Naive thymus-derived CD4-positive, alpha-beta T cell (primary cell): ENCODE measurements at regions of chr16 and their contacts with region 1.

Region 1: GRCh38 chr16:17369421-17370222 is 101.1 kb downstream of the XYLT1 start:
- DNase-seq: peak; percentile 45 to 88 (median 84)
- ATAC-seq: peak; percentile 91
- H3K4me3 ChIP-seq: peak overlapping the region; percentile 65
- H3K4me3 Mint-ChIP-seq: peak overlapping the region; percentile 77 to 96 (median 92)
- H3K27ac ChIP-seq: peak overlapping the region; percentile 70
- H3K27ac Mint-ChIP-seq: peak overlapping the region; percentile 96 to 100 (median 99)
- H3K4me1 ChIP-seq: peaks cover 78 to 81% of the 10 kb centered on the region in 2 donors
- H3K4me1 Mint-ChIP-seq: peaks cover 64 to 99% (median 92%) of the 10 kb centered on the region in 7 donors
- H3K27me3 ChIP-seq: no peaks in the 10 kb centered on the region
- H3K27me3 Mint-ChIP-seq: no peaks in the 10 kb centered on the region

Region 2: GRCh38 chr16:17013038-17013437 is 356.6 kb before region 1 on chr16:
- CTCF ChIA-PET with region 1: no interaction called
- POLR2A ChIA-PET with region 1: no interaction called
- intact Hi-C with region 1: loop called in 1 of 2 experiments (anchors 5 kb)
- DNase-seq: no peak
- ATAC-seq: no peak
- H3K4me3 ChIP-seq: peak overlapping the region; percentile 44
- H3K4me3 Mint-ChIP-seq: peak overlapping the region; percentile 42 to 89 (median 86)
- H3K27ac ChIP-seq: peak overlapping the region; percentile 2
- H3K27ac Mint-ChIP-seq: peak overlapping the region; percentile 85 to 98 (median 93)
- H3K4me1 ChIP-seq: peaks cover 5 to 8% of the 10 kb centered on the region in 2 donors
- H3K4me1 Mint-ChIP-seq: peaks cover 8 to 34% (median 22%) of the 10 kb centered on the region in 7 donors
- H3K27me3 ChIP-seq: no peaks in the 10 kb centered on the region
- H3K27me3 Mint-ChIP-seq: peaks cover 0 to 4% (median 0%) of the 10 kb centered on the region in 5 donors

Region 3: DNA sequence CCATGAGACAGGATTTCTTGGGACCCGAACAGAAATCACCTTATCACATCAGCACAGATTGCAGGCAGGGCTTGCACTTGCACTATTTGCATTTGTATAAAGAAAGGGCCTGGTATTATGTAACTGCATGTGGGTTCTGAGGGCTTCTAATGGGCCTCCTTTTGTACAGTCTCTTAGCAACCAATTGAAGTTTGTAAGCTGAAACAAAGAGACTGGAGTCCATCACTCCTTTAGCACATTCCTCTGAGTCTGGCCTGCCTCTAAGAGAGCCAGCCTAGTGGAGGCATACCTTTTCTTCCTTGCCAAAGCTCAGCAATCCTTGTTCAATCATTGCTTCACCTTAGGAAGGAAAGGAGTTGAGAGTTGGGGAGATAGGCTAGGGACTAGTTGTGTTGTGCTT is 286.0 kb before region 1 on chr16:
- CTCF ChIA-PET with region 1: no interaction called
- POLR2A ChIA-PET with region 1: no interaction called
- intact Hi-C with region 1: no loop called
- DNase-seq: no peak
- ATAC-seq: no peak
- H3K4me3 ChIP-seq: no peak overlapping the region
- H3K4me3 Mint-ChIP-seq: no peak overlapping the region
- H3K27ac ChIP-seq: no peak overlapping the region
- H3K27ac Mint-ChIP-seq: no peak overlapping the region
- H3K4me1 ChIP-seq: no peaks in the 10 kb centered on the region
- H3K4me1 Mint-ChIP-seq: peaks cover 0 to 5% (median 0%) of the 10 kb centered on the region in 7 donors
- H3K27me3 ChIP-seq: no peaks in the 10 kb centered on the region
- H3K27me3 Mint-ChIP-seq: no peaks in the 10 kb centered on the region

Region 4: DNA sequence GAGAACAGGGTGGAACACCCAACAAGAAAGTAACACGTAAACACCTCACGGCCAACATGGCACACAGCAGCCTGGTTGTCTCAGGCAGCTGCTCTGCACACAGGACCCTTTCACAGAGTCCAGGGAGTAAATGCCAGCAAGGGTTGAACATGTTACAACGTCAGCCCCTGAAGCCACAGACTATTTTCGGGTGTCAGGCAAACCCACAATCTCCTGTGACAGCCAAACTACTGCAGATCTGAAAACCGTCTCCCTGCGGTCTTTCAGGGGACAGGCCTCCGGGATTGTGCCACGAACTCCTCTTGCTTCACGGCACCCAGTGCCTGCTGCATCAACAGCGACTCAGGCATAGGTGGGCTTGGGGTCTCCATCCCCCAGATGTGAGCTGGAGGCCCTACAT is 26.6 kb before region 1 on chr16:
- CTCF ChIA-PET with region 1: interaction called, 9 read pairs
- POLR2A ChIA-PET with region 1: interaction called, 22 read pairs
- intact Hi-C with region 1: loop called (anchors 1 to 2 kb)
- DNase-seq: peak in 8 of 9 donors; percentile 25 to 69 (median 56)
- ATAC-seq: peak; percentile 80
- H3K4me3 ChIP-seq: peak overlapping the region; percentile 16
- H3K4me3 Mint-ChIP-seq: peak overlapping the region; percentile 40 to 83 (median 76)
- H3K27ac ChIP-seq: no peak overlapping the region
- H3K27ac Mint-ChIP-seq: peak overlapping the region; percentile 32 to 95 (median 90)
- H3K4me1 ChIP-seq: peaks cover 51 to 64% of the 10 kb centered on the region in 2 donors
- H3K4me1 Mint-ChIP-seq: peaks cover 61 to 97% (median 83%) of the 10 kb centered on the region in 7 donors
- H3K27me3 ChIP-seq: no peaks in the 10 kb centered on the region
- H3K27me3 Mint-ChIP-seq: no peaks in the 10 kb centered on the region

Region 5: GRCh38 chr16:17416461-17417311 is 47.1 kb after region 1 on chr16:
- CTCF ChIA-PET with region 1: interaction called, 10 read pairs
- POLR2A ChIA-PET with region 1: interaction called, 21 read pairs
- intact Hi-C with region 1: loop called (anchors 1 to 5 kb)
- DNase-seq: peak; percentile 24 to 65 (median 55)
- ATAC-seq: peak; percentile 93
- H3K4me3 ChIP-seq: peak overlapping the region; percentile 22
- H3K4me3 Mint-ChIP-seq: peak overlapping the region; percentile 68 to 91 (median 85)
- H3K27ac ChIP-seq: peak overlapping the region; percentile 60
- H3K27ac Mint-ChIP-seq: peak overlapping the region; percentile 79 to 97 (median 91)
- H3K4me1 ChIP-seq: peaks cover 13 to 14% of the 10 kb centered on the region in 2 donors
- H3K4me1 Mint-ChIP-seq: peaks cover 18 to 69% (median 52%) of the 10 kb centered on the region in 7 donors
- H3K27me3 ChIP-seq: no peaks in the 10 kb centered on the region
- H3K27me3 Mint-ChIP-seq: no peaks in the 10 kb centered on the region

Region 6: GRCh38 chr16:17578921-17579874 is 209.6 kb after region 1 on chr16:
- CTCF ChIA-PET with region 1: no interaction called
- POLR2A ChIA-PET with region 1: no interaction called
- intact Hi-C with region 1: loop called in 1 of 2 experiments (anchors 10 kb)
- DNase-seq: peak; percentile 21 to 62 (median 39)
- ATAC-seq: peak; percentile 84
- H3K4me3 ChIP-seq: no peak overlapping the region
- H3K4me3 Mint-ChIP-seq: no peak overlapping the region
- H3K27ac ChIP-seq: no peak overlapping the region
- H3K27ac Mint-ChIP-seq: no peak overlapping the region
- H3K4me1 ChIP-seq: no peaks in the 10 kb centered on the region
- H3K4me1 Mint-ChIP-seq: peaks cover 0 to 5% (median 0%) of the 10 kb centered on the region in 7 donors
- H3K27me3 ChIP-seq: no peaks in the 10 kb centered on the region
- H3K27me3 Mint-ChIP-seq: peaks cover 0 to 18% (median 8%) of the 10 kb centered on the region in 5 donors

Region 7: GRCh38 chr16:17633104-17633951 is 263.7 kb after region 1 on chr16:
- CTCF ChIA-PET with region 1: no interaction called
- POLR2A ChIA-PET with region 1: no interaction called
- intact Hi-C with region 1: no loop called
- DNase-seq: no peak
- ATAC-seq: no peak
- H3K4me3 ChIP-seq: no peak overlapping the region
- H3K4me3 Mint-ChIP-seq: no peak overlapping the region
- H3K27ac ChIP-seq: no peak overlapping the region
- H3K27ac Mint-ChIP-seq: no peak overlapping the region
- H3K4me1 ChIP-seq: no peaks in the 10 kb centered on the region
- H3K4me1 Mint-ChIP-seq: no peaks in the 10 kb centered on the region
- H3K27me3 ChIP-seq: no peaks in the 10 kb centered on the region
- H3K27me3 Mint-ChIP-seq: peaks cover 4 to 36% (median 30%) of the 10 kb centered on the region in 5 donors